Natural killer cell (primary cell): ENCODE measurements at regions of chr6 and their contacts with region 1.

Region 1: DNA sequence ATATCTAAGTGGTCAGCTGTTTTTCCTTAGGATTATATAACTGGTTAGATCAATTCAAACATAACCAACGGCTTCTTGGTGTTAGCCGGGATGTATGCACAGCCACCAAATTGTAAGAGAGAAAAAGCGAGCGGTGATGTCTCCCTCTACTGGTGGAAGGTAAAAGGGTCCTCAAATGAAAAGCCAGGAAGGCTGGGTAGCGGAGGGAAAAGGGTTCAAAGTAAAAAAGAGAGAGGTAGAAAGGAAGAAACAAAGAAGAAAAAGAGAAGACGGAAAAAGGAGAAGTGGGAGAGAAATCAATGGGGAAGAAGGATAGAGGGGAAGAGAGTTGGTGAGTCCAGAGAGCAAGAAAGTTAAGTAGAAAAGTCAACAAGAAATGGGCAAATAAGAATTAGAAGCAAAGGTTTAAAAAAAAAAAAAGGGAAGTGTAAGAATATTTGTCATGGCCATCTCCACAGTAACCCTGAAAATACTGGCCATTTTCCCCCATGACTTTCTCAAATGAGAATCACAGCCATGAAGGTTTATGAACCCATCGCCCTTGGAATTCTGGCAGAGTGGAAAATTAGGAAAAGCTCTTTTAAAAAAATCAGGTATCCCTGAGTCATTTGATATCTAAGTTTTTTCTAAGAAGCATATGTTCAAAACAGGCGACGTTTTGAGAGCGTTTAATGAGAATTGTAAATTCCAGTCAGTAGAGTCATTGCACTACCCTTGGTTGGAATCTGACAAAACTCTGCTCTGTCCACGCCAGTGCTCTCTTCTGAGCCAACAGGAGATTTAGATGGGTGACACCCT is 155.6 kb upstream of the SNX9 start:
- DNase-seq: peak; percentile 21 to 80
- ATAC-seq: peak; percentile 72 to 81 (median 78)
- H3K4me3 ChIP-seq: no peak overlapping the region
- H3K4me3 Mint-ChIP-seq: no peak overlapping the region
- H3K27ac ChIP-seq: no peak overlapping the region
- H3K27ac Mint-ChIP-seq: no peak overlapping the region
- H3K4me1 ChIP-seq: peaks cover 3% of the 10 kb centered on the region
- H3K4me1 Mint-ChIP-seq: peaks cover 6 to 13% of the 10 kb centered on the region in 2 donors
- H3K27me3 ChIP-seq: no peaks in the 10 kb centered on the region
- H3K27me3 Mint-ChIP-seq: peaks cover 0 to 4% of the 10 kb centered on the region in 2 donors
- CTCF ChIP-seq: peak; percentile 86

Region 2: GRCh38 chr6:156760377-156760776 is 907.0 kb before region 1 on chr6:
- intact Hi-C with region 1: no loop called
- DNase-seq: no peak
- ATAC-seq: no peak
- H3K4me3 ChIP-seq: no peak overlapping the region
- H3K4me3 Mint-ChIP-seq: no peak overlapping the region
- H3K27ac ChIP-seq: no peak overlapping the region
- H3K27ac Mint-ChIP-seq: no peak overlapping the region
- H3K4me1 ChIP-seq: no peaks in the 10 kb centered on the region
- H3K4me1 Mint-ChIP-seq: no peaks in the 10 kb centered on the region
- H3K27me3 ChIP-seq: no peaks in the 10 kb centered on the region
- H3K27me3 Mint-ChIP-seq: peaks cover 0 to 3% of the 10 kb centered on the region in 2 donors
- CTCF ChIP-seq: no peak

Region 3: GRCh38 chr6:157314705-157315321 is 352.6 kb before region 1 on chr6:
- intact Hi-C with region 1: loop called (anchors 1 kb)
- DNase-seq: peak in 1 of 2 donors; percentile 78
- ATAC-seq: peak; percentile 82 to 98 (median 96)
- H3K4me3 ChIP-seq: no peak overlapping the region
- H3K4me3 Mint-ChIP-seq: no peak overlapping the region
- H3K27ac ChIP-seq: no peak overlapping the region
- H3K27ac Mint-ChIP-seq: no peak overlapping the region
- H3K4me1 ChIP-seq: peaks cover 2% of the 10 kb centered on the region
- H3K4me1 Mint-ChIP-seq: peaks cover 0 to 9% of the 10 kb centered on the region in 2 donors
- H3K27me3 ChIP-seq: no peaks in the 10 kb centered on the region
- H3K27me3 Mint-ChIP-seq: no peaks in the 10 kb centered on the region
- CTCF ChIP-seq: peak; percentile 84

Region 4: GRCh38 chr6:157379656-157380454 is 287.6 kb before region 1 on chr6:
- intact Hi-C with region 1: loop called (anchors 5 kb)
- DNase-seq: peak; percentile 79 to 92
- ATAC-seq: peak; percentile 75 to 84 (median 76)
- H3K4me3 ChIP-seq: peak overlapping the region; percentile 86
- H3K4me3 Mint-ChIP-seq: peak overlapping the region; percentile 87
- H3K27ac ChIP-seq: peak overlapping the region; percentile 73
- H3K27ac Mint-ChIP-seq: peak overlapping the region; percentile 60 to 72
- H3K4me1 ChIP-seq: peaks cover 12% of the 10 kb centered on the region
- H3K4me1 Mint-ChIP-seq: peaks cover 30% of the 10 kb centered on the region in 2 donors
- H3K27me3 ChIP-seq: no peaks in the 10 kb centered on the region
- H3K27me3 Mint-ChIP-seq: no peaks in the 10 kb centered on the region
- CTCF ChIP-seq: no peak

Region 5: DNA sequence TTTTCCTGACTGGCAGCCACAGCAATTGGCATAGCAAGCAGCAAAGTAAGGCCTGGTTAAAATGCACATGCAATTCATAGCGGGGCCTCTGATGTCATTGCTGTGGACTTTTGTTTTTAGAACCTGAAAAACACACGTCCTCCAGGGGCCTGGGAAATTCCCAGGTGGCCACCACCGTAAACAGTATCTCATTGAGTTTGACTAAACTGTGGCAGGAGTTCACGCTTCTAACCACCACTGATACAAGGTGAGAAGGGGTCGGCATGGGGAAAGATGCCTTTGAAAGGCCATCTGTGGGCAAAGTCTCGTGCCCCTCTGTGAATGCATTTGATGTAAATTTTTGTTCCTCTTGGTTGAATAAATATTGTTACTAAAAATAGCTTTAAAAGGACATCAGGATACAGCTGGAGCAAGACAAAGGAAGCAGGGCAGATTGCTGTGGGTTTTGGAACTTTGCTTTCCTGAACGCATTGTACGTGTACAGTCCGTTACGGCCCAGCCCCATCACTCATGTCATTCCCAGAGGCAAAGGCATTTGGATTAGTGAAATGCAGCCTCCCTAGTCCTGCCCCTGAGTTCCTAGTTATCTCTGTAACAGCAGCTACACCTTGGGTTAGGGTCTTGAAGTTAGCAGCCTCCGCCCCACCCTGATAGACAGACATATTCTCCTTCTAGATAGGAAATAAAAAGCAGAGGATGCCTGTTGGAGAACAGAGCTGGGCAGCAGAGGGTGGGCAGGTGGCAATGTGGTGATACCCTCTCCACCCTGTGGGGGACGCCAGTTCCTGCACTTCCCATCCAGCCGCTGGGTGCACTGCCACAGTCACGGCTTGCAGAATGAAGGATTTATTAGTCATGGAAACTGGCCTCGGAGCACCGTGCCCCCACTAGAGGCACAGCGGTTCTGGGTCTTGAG is 206.2 kb before region 1 on chr6:
- intact Hi-C with region 1: loop called (anchors 5 kb)
- DNase-seq: peak; percentile 46 to 65
- ATAC-seq: peak; percentile 84 to 95 (median 84)
- H3K4me3 ChIP-seq: no peak overlapping the region
- H3K4me3 Mint-ChIP-seq: peak overlapping the region; percentile 18
- H3K27ac ChIP-seq: no peak overlapping the region
- H3K27ac Mint-ChIP-seq: peak overlapping the region; percentile 33 to 49
- H3K4me1 ChIP-seq: peaks cover 41% of the 10 kb centered on the region
- H3K4me1 Mint-ChIP-seq: peaks cover 15 to 25% of the 10 kb centered on the region in 2 donors
- H3K27me3 ChIP-seq: no peaks in the 10 kb centered on the region
- H3K27me3 Mint-ChIP-seq: peaks cover 0 to 2% of the 10 kb centered on the region in 2 donors
- CTCF ChIP-seq: peak; percentile 19

Region 6: DNA sequence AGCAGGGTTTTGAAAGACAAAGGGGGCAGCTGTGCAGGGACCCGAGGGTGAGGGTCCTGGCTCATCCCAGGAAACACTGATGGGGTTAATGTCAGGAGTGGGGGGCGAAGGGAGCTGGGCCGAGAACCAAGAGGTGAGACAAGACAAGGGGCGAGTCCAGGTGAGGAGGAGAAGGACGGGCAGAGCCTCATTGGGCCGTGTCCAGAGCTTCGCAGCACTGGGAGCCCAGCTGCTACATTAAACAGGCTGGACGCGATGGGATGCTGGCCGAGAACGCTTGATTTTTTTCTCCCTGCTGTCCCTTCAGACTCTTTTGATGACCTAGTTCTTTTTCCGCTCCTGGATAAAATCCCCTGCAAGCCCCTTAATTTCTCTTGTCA is 17.2 kb before region 1 on chr6:
- intact Hi-C with region 1: no loop called
- DNase-seq: no peak
- ATAC-seq: no peak
- H3K4me3 ChIP-seq: no peak overlapping the region
- H3K4me3 Mint-ChIP-seq: no peak overlapping the region
- H3K27ac ChIP-seq: no peak overlapping the region
- H3K27ac Mint-ChIP-seq: no peak overlapping the region
- H3K4me1 ChIP-seq: peaks cover 5% of the 10 kb centered on the region
- H3K4me1 Mint-ChIP-seq: peaks cover 12 to 13% of the 10 kb centered on the region in 2 donors
- H3K27me3 ChIP-seq: no peaks in the 10 kb centered on the region
- H3K27me3 Mint-ChIP-seq: no peaks in the 10 kb centered on the region
- CTCF ChIP-seq: no peak

Region 7: DNA sequence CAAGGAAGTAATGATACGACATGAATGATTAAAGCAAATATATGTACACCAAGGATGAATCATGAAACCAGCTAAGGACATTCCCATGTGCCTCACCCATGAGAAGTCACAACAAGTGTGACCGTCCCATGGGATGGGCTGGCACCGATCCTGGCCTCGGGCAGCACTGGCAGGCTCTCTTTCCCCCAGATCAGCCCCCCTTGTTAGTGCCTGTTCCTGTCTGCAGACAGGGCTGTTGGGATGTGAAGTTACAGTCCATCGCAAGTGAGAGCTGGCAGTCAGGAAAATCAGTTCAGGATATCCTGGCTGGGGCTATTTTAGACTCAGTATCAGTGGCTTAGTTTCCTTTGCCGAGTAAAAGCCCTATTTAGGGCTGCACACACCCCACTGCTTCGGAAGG is 26.5 kb after region 1 on chr6:
- intact Hi-C with region 1: no loop called
- DNase-seq: no peak
- ATAC-seq: no peak
- H3K4me3 ChIP-seq: no peak overlapping the region
- H3K4me3 Mint-ChIP-seq: no peak overlapping the region
- H3K27ac ChIP-seq: no peak overlapping the region
- H3K27ac Mint-ChIP-seq: no peak overlapping the region
- H3K4me1 ChIP-seq: no peaks in the 10 kb centered on the region
- H3K4me1 Mint-ChIP-seq: no peaks in the 10 kb centered on the region
- H3K27me3 ChIP-seq: no peaks in the 10 kb centered on the region
- H3K27me3 Mint-ChIP-seq: peaks cover 20 to 21% of the 10 kb centered on the region in 2 donors
- CTCF ChIP-seq: no peak

Region 8: GRCh38 chr6:157715765-157716164 is 48.4 kb after region 1 on chr6:
- intact Hi-C with region 1: no loop called
- DNase-seq: no peak
- ATAC-seq: no peak
- H3K4me3 ChIP-seq: no peak overlapping the region
- H3K4me3 Mint-ChIP-seq: no peak overlapping the region
- H3K27ac ChIP-seq: no peak overlapping the region
- H3K27ac Mint-ChIP-seq: no peak overlapping the region
- H3K4me1 ChIP-seq: no peaks in the 10 kb centered on the region
- H3K4me1 Mint-ChIP-seq: no peaks in the 10 kb centered on the region
- H3K27me3 ChIP-seq: no peaks in the 10 kb centered on the region
- H3K27me3 Mint-ChIP-seq: peaks cover 8 to 19% of the 10 kb centered on the region in 2 donors
- CTCF ChIP-seq: no peak